Caco-2 (cell line): ENCODE measurements at regions of chr11 and their contacts with region 1.

Region 1: GRCh38 chr11:108008656-108009496 is at the start of gene CUL5:
- DNase-seq: peak; percentile 97 to 98
- H3K4me3 ChIP-seq: peak within 1 kb of the TSS; percentile 85
- H3K4me3 Mint-ChIP-seq: peak within 1 kb of the TSS; percentile 85
- H3K27ac Mint-ChIP-seq: peak within 1 kb of the TSS; percentile 99
- H3K4me1 ChIP-seq: peaks cover 17% of the 10 kb centered on the region
- H3K4me1 Mint-ChIP-seq: peaks cover 6% of the 10 kb centered on the region
- H3K27me3 ChIP-seq: no peaks in the 10 kb centered on the region
- H3K27me3 Mint-ChIP-seq: no peaks in the 10 kb centered on the region
- CTCF ChIP-seq: peak; percentile 97 to 99
- total RNA-seq, gene CUL5: 75.4 and 76.6 TPM in 2 replicates

Region 2: GRCh38 chr11:108027056-108027455 is 18.2 kb after region 1 on chr11:
- CTCF ChIA-PET with region 1: interaction called, 10 read pairs
- POLR2A ChIA-PET with region 1: no interaction called
- intact Hi-C with region 1: no loop called
- DNase-seq: peak in 1 of 2 experiments; percentile 35
- H3K4me3 ChIP-seq: no peak overlapping the region
- H3K4me3 Mint-ChIP-seq: no peak overlapping the region
- H3K27ac Mint-ChIP-seq: no peak overlapping the region
- H3K4me1 ChIP-seq: no peaks in the 10 kb centered on the region
- H3K4me1 Mint-ChIP-seq: peaks cover 14% of the 10 kb centered on the region
- H3K27me3 ChIP-seq: no peaks in the 10 kb centered on the region
- H3K27me3 Mint-ChIP-seq: no peaks in the 10 kb centered on the region
- CTCF ChIP-seq: peak in 1 of 2 experiments; percentile 22

Region 3: DNA sequence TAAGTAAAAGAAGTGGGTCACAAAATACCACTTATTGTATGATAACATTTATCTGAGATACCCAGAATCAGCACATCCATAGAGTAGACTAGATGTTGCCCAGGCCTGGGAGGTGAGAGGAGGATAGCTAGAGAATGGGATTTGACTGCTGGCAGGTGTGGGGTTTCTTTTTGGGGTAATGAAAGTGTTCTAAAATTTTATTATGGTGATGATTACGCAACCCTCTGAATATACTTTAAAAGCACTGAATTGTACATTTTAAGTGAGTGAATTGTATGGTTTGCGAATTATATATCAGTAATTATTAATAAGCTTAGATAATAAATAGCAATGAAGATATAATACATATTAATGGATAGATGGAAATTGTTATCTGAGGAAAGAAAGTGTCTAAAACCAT is 76.8 kb after region 1 on chr11:
- CTCF ChIA-PET with region 1: no interaction called
- POLR2A ChIA-PET with region 1: no interaction called
- intact Hi-C with region 1: no loop called
- DNase-seq: no peak
- H3K4me3 ChIP-seq: no peak overlapping the region
- H3K4me3 Mint-ChIP-seq: no peak overlapping the region
- H3K27ac Mint-ChIP-seq: no peak overlapping the region
- H3K4me1 ChIP-seq: no peaks in the 10 kb centered on the region
- H3K4me1 Mint-ChIP-seq: no peaks in the 10 kb centered on the region
- H3K27me3 ChIP-seq: no peaks in the 10 kb centered on the region
- H3K27me3 Mint-ChIP-seq: no peaks in the 10 kb centered on the region
- CTCF ChIP-seq: no peak

Region 4: GRCh38 chr11:108121274-108122155 is 112.6 kb after region 1 on chr11 and contains the start of gene ACAT1:
- CTCF ChIA-PET with region 1: interaction called, 4 read pairs
- POLR2A ChIA-PET with region 1: no interaction called
- intact Hi-C with region 1: loop called (anchors 2 kb)
- DNase-seq: peak; percentile 98 to 100
- H3K4me3 ChIP-seq: peak within 1 kb of the TSS; percentile 88
- H3K4me3 Mint-ChIP-seq: peak within 1 kb of the TSS; percentile 81
- H3K27ac Mint-ChIP-seq: peak within 1 kb of the TSS; percentile 66
- H3K4me1 ChIP-seq: peaks cover 13% of the 10 kb centered on the region
- H3K4me1 Mint-ChIP-seq: peaks cover 27% of the 10 kb centered on the region
- H3K27me3 ChIP-seq: no peaks in the 10 kb centered on the region
- H3K27me3 Mint-ChIP-seq: no peaks in the 10 kb centered on the region
- CTCF ChIP-seq: peak; percentile 54 to 67
- total RNA-seq, gene ACAT1: 131 and 134 TPM in 2 replicates

Region 5: DNA sequence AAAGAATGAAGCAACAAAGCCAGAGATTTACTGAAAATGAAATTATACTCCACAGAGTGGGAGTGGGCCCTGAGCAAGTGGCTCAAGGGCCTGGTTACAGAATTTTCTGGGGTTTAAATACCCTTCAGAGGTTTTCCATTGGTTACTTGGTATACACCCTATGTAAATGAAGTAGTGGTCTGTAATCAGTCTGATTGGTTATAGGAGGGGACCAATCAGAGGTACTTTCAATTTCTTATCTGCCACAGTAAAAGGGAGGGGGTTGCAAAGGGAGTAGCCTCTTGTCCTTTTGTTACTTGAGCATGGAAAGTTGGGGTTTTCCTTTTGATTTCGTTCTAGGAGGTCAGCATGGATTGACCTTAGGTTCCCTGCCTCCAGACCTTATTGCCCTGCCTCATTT is 277.5 kb after region 1 on chr11:
- CTCF ChIA-PET with region 1: no interaction called
- POLR2A ChIA-PET with region 1: no interaction called
- intact Hi-C with region 1: no loop called
- DNase-seq: no peak
- H3K4me3 ChIP-seq: no peak overlapping the region
- H3K4me3 Mint-ChIP-seq: no peak overlapping the region
- H3K27ac Mint-ChIP-seq: no peak overlapping the region
- H3K4me1 ChIP-seq: no peaks in the 10 kb centered on the region
- H3K4me1 Mint-ChIP-seq: no peaks in the 10 kb centered on the region
- H3K27me3 ChIP-seq: no peaks in the 10 kb centered on the region
- H3K27me3 Mint-ChIP-seq: no peaks in the 10 kb centered on the region
- CTCF ChIP-seq: no peak

Region 6: DNA sequence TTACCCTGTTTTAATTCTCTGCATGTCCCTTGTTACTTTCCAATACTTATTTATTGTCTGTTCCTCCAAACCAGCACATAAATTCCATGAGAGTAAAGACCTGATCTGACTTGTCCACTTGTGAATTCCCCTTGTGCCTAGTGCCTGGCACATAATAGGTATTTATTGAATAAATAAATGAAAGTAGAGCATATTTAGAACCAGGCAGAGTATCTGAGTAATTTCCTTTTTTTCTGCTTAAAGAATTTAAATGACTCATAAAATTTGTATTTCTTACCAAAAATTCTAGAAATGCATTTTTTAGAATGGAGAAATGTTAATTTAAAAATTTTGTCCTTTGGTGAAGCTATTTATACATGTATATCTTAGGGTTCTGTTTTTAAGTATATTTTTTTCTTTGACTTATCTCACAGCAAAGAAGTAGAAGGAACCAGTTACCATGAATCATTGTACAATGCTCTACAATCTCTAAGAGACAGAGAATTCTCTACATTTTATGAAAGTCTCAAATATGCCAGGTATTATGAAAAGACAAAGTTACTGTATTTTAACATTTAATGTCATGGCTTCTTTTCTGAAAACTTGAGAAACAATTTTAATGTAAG is 310.8 kb after region 1 on chr11:
- CTCF ChIA-PET with region 1: no interaction called
- POLR2A ChIA-PET with region 1: no interaction called
- intact Hi-C with region 1: loop called (anchors 10 kb)
- DNase-seq: no peak
- H3K4me3 ChIP-seq: no peak overlapping the region
- H3K4me3 Mint-ChIP-seq: no peak overlapping the region
- H3K27ac Mint-ChIP-seq: no peak overlapping the region
- H3K4me1 ChIP-seq: peaks cover 10% of the 10 kb centered on the region
- H3K4me1 Mint-ChIP-seq: peaks cover 9% of the 10 kb centered on the region
- H3K27me3 ChIP-seq: no peaks in the 10 kb centered on the region
- H3K27me3 Mint-ChIP-seq: no peaks in the 10 kb centered on the region
- CTCF ChIP-seq: no peak